Caco-2 (cell line): ENCODE measurements at regions of chr3 and their contacts with region 1.

Region 1: DNA sequence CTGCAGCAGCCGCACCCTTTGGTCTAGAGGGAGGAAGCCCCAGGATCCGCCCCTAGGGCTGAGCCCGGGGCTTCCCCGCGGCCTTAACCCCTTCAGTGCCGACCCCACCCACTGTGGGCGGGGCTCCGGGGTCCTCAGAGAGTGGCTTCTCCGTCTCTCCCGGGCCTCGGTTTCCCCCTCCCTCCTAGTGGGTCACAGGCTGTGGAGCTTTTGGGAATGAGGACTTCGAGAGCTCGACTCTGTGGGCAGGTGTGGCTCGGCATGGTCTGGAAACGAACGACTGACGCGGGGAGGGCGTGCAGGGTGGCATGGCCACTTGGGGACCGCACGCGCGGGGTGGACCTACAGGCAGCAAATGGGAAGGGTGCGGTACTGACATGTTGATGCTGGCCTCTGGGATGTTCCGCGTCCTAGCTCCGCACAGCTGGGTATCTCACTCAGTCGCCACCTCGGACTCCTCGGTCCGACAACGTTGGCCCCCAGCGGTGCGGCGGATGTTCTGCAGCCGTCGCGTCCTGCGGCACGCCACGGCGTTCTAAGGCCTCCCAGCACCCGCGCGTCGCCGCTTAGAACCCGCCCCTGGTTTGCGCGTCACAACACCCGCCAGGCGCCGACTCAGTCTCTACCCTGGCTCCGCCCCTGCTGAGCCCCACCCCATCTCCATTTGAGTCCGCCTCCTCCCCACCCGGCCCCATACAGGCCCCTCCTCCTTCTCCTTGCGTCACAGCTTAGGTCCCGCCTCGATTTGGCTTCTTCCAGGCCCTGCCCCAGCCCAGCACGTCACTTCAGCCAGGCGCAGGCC is at the starts of genes HYAL3 and NAA80:
- DNase-seq: peak; percentile 99
- H3K4me3 ChIP-seq: peak within 1 kb of the TSS; percentile 47
- H3K4me3 Mint-ChIP-seq: peak within 1 kb of the TSS; percentile 97
- H3K27ac Mint-ChIP-seq: peak within 1 kb of the TSS; percentile 95
- H3K4me1 ChIP-seq: peaks cover 20% of the 10 kb centered on the region
- H3K4me1 Mint-ChIP-seq: peaks cover 11% of the 10 kb centered on the region
- H3K27me3 ChIP-seq: no peaks in the 10 kb centered on the region
- H3K27me3 Mint-ChIP-seq: no peaks in the 10 kb centered on the region
- CTCF ChIP-seq: peak; percentile 15 to 26
- total RNA-seq, gene HYAL3: 5.2 and 6.8 TPM in 2 replicates
- total RNA-seq, gene NAA80: 6.7 and 8.2 TPM in 2 replicates

Region 2: DNA sequence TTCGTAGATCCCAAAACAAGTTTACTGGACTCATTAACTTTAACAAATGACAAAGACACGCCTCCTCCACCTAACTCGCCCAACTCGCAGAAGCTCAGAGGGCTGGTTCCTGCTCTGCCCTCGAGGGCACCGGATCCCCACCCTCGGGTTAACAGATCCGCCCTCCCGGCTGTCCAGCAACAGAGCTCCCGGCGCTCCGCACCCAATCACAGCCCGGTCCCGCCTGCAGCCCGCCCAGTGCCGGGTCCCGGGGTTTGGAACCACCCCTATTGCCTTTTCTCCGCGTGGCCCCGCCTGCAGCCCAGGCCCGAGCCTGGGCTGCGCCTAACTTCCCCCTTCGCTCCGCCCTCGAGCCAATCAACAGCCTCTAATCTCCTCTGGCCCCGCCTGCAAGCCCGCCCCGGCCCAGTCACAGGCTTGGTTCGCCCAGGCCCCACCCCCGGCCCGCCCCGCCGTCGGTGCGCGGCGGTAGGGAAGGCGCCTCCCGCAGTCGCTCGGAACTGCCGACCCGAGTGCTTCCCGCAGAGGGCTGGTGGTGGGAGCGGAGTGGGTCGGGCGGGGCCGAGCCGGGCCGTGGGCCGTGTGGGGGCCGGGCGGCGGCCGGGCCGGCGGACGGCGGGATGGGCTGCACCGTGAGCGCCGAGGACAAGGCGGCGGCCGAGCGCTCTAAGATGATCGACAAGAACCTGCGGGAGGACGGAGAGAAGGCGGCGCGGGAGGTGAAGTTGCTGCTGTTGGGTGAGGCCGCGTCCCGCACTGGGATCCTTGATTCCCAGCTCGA is 63.1 kb before region 1 on chr3 and contains the start of gene GNAI2:
- CTCF ChIA-PET with region 1: no interaction called
- POLR2A ChIA-PET with region 1: interaction called, 12 read pairs
- intact Hi-C with region 1: loop called (anchors 2 kb)
- DNase-seq: peak; percentile 98 to 99
- H3K4me3 ChIP-seq: peak within 1 kb of the TSS; percentile 52
- H3K4me3 Mint-ChIP-seq: peak within 1 kb of the TSS; percentile 94
- H3K27ac Mint-ChIP-seq: peak within 1 kb of the TSS; percentile 82
- H3K4me1 ChIP-seq: peaks cover 23% of the 10 kb centered on the region
- H3K4me1 Mint-ChIP-seq: peaks cover 13% of the 10 kb centered on the region
- H3K27me3 ChIP-seq: no peaks in the 10 kb centered on the region
- H3K27me3 Mint-ChIP-seq: no peaks in the 10 kb centered on the region
- CTCF ChIP-seq: no peak
- total RNA-seq, gene GNAI2: 59.3 and 62.0 TPM in 2 replicates

Region 3: GRCh38 chr3:50279255-50280016 is 19.6 kb before region 1 on chr3:
- CTCF ChIA-PET with region 1: interaction called, 3 read pairs
- POLR2A ChIA-PET with region 1: no interaction called
- intact Hi-C with region 1: loop called (anchors 2 kb)
- DNase-seq: no peak
- H3K4me3 ChIP-seq: no peak overlapping the region
- H3K4me3 Mint-ChIP-seq: no peak overlapping the region
- H3K27ac Mint-ChIP-seq: no peak overlapping the region
- H3K4me1 ChIP-seq: no peaks in the 10 kb centered on the region; the same call in 1 of the 2 replicates
- H3K4me1 Mint-ChIP-seq: peaks cover 3% of the 10 kb centered on the region
- H3K27me3 ChIP-seq: no peaks in the 10 kb centered on the region
- H3K27me3 Mint-ChIP-seq: no peaks in the 10 kb centered on the region
- CTCF ChIP-seq: no peak

Region 4: GRCh38 chr3:50337191-50337841 is 38.3 kb after region 1 on chr3:
- CTCF ChIA-PET with region 1: interaction called, 4 read pairs
- POLR2A ChIA-PET with region 1: interaction called, 17 read pairs
- intact Hi-C with region 1: no loop called
- DNase-seq: peak; percentile 99
- H3K4me3 ChIP-seq: peak overlapping the region; percentile 63
- H3K4me3 Mint-ChIP-seq: peak overlapping the region; percentile 94
- H3K27ac Mint-ChIP-seq: peak overlapping the region; percentile 95
- H3K4me1 ChIP-seq: peaks cover 16% of the 10 kb centered on the region
- H3K4me1 Mint-ChIP-seq: peaks cover 11% of the 10 kb centered on the region
- H3K27me3 ChIP-seq: no peaks in the 10 kb centered on the region
- H3K27me3 Mint-ChIP-seq: no peaks in the 10 kb centered on the region
- CTCF ChIP-seq: no peak